ENCODE measurements at regions of chr18 and their contacts with region 1.

Region 1: GRCh38 chr18:58043491-58044379 is at the start of gene NEDD4L:
- DNase-seq: peak; percentile 83
- ATAC-seq: peak; percentile 58
- H3K4me3 ChIP-seq: peak within 1 kb of the TSS; percentile 95
- H3K27ac ChIP-seq: peak within 1 kb of the TSS; percentile 71
- H3K4me1 ChIP-seq: peaks cover 17% of the 10 kb centered on the region
- H3K27me3 ChIP-seq: no peaks in the 10 kb centered on the region
- CTCF ChIP-seq: peak; percentile 81
- total RNA-seq, gene NEDD4L: 100 and 105 TPM in 2 replicates

Region 2: GRCh38 chr18:57644540-57644939 is 399.2 kb before region 1 on chr18:
- CTCF ChIA-PET with region 1: interaction called, 4 read pairs
- POLR2A ChIA-PET with region 1: no interaction called
- intact Hi-C with region 1: loop called (anchors 1 kb)
- DNase-seq: peak; percentile 41
- ATAC-seq: peak; percentile 73
- H3K4me3 ChIP-seq: no peak overlapping the region
- H3K27ac ChIP-seq: no peak overlapping the region
- H3K4me1 ChIP-seq: peaks cover 4% of the 10 kb centered on the region
- H3K27me3 ChIP-seq: no peaks in the 10 kb centered on the region
- CTCF ChIP-seq: peak; percentile 56

Region 3: DNA sequence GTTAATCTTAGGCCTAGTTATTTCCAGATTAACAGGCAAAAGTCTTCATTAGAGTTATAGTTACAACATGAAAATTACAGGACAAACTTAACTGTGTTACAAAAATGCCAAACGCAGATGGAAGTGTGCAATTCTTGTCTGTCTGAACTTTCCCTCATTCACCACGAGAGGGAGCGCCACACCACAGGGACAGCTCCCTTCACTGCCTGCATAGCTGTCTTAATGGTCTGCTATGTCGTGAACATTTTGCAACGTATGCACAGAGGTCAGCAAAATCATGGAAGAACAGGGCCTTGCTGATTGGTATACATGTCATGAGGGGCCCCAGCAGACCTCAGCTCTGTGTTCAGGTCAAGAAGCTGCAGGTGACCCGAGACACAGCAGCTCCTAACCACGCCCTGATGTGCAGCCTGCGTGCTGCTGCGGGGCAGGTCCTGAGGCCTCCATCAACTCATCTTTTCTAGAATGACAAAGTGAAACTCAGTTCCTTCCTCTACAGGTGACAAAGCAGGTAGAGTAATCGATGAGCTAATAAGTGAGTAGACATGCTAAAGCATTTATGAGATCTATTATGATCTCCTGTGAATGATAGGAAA is 161.8 kb before region 1 on chr18:
- CTCF ChIA-PET with region 1: interaction called, 4 read pairs
- POLR2A ChIA-PET with region 1: no interaction called
- intact Hi-C with region 1: loop called (anchors 1 kb)
- DNase-seq: peak; percentile 76
- ATAC-seq: peak; percentile 95
- H3K4me3 ChIP-seq: no peak overlapping the region
- H3K27ac ChIP-seq: no peak overlapping the region
- H3K4me1 ChIP-seq: peaks cover 7% of the 10 kb centered on the region
- H3K27me3 ChIP-seq: no peaks in the 10 kb centered on the region
- CTCF ChIP-seq: peak; percentile 91

Region 4: DNA sequence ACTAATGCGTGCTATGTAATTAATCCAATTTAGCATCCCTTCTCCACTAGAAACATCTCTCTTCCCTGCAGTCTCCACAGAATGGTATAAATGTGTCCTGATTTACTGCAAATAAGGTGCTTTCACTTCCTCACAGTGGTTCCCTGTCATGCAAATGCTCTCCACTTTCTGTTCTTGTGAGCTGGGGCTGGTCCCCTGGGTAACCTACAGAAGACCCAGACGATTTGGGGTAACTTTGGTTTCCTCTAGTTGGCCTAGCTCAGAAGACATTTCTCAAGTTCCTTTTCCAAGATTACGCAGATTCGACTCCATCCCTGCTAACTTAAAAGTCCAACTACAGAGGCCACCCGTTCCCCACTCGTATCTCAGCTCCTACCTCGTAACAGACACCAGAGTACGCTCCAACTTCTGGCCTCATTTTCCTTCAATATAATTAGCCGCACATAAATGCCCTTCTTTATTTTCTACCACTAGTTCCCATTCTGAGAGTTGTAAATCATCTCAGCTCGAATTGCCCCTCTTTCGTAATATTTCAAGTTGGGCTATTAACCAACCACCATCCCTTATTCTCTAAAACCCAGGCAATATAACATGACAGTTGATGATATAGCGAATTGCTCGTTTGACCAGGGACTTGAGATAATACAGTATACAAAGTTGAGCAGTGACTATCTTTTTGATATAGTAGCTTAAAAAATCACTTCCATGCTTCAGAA is 28.5 kb before region 1 on chr18:
- CTCF ChIA-PET with region 1: interaction called, 5 read pairs
- POLR2A ChIA-PET with region 1: no interaction called
- intact Hi-C with region 1: loop called (anchors 2 kb)
- DNase-seq: no peak
- ATAC-seq: no peak
- H3K4me3 ChIP-seq: no peak overlapping the region
- H3K27ac ChIP-seq: no peak overlapping the region
- H3K4me1 ChIP-seq: peaks cover 40% of the 10 kb centered on the region
- H3K27me3 ChIP-seq: no peaks in the 10 kb centered on the region
- CTCF ChIP-seq: no peak

Region 5: GRCh38 chr18:58117786-58118403 is 74.2 kb after region 1 on chr18:
- CTCF ChIA-PET with region 1: interaction called, 21 read pairs
- POLR2A ChIA-PET with region 1: interaction called, 3 read pairs
- intact Hi-C with region 1: loop called (anchors 1 kb)
- DNase-seq: peak; percentile 93
- ATAC-seq: peak; percentile 84
- H3K4me3 ChIP-seq: no peak overlapping the region
- H3K27ac ChIP-seq: peak overlapping the region; percentile 74
- H3K4me1 ChIP-seq: peaks cover 31% of the 10 kb centered on the region
- H3K27me3 ChIP-seq: no peaks in the 10 kb centered on the region
- CTCF ChIP-seq: no peak

Region 6: DNA sequence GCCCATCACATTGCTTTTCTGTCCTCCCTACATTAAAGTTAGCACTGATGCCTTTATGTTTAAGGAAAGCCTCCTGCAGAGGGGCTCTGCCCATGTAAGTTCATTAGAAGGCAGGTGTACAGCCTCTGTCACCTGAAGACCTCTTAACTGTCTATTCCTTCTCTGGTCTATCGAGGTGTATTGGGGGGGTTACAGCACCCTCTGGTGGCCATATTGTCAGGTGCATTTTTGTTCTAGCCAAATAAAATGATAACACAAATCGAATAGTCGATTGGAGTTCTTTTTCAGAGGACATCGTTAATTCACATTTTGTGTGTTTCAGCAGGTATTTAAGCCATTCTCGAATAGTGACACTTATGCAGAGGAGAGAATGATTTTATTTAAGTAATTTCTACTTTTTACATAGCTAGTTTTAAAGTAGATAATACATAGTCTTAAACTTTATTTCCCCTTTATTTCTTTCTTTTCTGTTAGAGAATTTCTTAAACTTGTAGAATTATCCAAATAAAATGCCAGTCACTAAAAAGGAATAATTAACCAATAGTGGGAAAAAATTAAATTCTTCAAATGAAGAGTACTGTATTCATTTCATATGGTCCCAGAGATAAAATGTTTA is 137.1 kb after region 1 on chr18:
- CTCF ChIA-PET with region 1: no interaction called
- POLR2A ChIA-PET with region 1: no interaction called
- intact Hi-C with region 1: loop called (anchors 2 kb)
- DNase-seq: peak; percentile 72
- ATAC-seq: no peak
- H3K4me3 ChIP-seq: no peak overlapping the region
- H3K27ac ChIP-seq: no peak overlapping the region
- H3K4me1 ChIP-seq: peaks cover 38% of the 10 kb centered on the region
- H3K27me3 ChIP-seq: no peaks in the 10 kb centered on the region
- CTCF ChIP-seq: peak; percentile 94

Region 7: GRCh38 chr18:58493516-58494253 is 449.9 kb after region 1 on chr18:
- CTCF ChIA-PET with region 1: no interaction called
- POLR2A ChIA-PET with region 1: no interaction called
- intact Hi-C with region 1: loop called (anchors 10 kb)
- DNase-seq: peak; percentile 82
- ATAC-seq: peak; percentile 89
- H3K4me3 ChIP-seq: peak overlapping the region; percentile 43; the same call in 1 of the 2 replicates
- H3K27ac ChIP-seq: no peak overlapping the region
- H3K4me1 ChIP-seq: 0 out of 2 replicates have a peak, but pooled peaks cover 6% of the 10 kb centered on the region
- H3K27me3 ChIP-seq: no peaks in the 10 kb centered on the region
- CTCF ChIP-seq: peak; percentile 93